AG04449 (cell line): ENCODE measurements at regions of chr14 and their contacts with region 1.

Region 1: DNA sequence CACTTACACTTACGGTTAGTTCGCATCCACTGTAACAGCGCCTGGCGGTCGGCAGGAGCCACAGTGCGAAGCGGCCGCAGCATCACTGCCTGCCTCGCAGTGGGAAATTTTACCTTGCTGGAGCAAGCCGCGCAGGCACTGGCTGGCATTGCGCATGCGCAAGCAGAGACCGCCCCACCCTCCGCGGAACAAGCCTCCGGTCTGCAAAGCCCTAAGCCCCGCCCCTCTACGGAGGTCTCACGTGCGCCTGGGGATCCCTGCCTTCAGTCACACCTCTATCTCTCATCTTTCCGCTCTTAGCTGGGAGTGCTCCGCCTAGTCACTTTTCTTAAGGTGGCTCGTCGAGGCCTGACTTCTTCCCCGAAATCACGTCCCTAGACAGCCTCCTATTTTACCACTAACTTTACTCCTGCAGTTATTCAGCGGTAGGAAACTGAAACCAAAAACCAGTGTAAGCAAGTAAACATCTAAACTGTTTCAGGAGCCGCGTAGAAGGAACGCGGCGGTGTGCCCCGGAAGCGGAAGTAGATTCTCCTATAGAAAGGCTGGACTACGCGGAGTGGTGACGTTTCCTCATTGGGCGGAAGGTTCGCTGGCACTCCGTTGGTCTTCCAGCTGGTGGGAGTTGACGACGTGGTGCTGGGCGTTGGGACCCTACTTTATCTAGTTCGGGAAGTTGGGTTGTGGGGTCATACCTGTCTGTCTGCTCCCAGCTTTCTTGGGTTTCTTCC is at the start of gene SRP54:
- DNase-seq: peak; percentile 75
- H3K4me3 ChIP-seq: peak within 1 kb of the TSS; percentile 94
- CTCF ChIP-seq: peak; percentile 41

Region 2: DNA sequence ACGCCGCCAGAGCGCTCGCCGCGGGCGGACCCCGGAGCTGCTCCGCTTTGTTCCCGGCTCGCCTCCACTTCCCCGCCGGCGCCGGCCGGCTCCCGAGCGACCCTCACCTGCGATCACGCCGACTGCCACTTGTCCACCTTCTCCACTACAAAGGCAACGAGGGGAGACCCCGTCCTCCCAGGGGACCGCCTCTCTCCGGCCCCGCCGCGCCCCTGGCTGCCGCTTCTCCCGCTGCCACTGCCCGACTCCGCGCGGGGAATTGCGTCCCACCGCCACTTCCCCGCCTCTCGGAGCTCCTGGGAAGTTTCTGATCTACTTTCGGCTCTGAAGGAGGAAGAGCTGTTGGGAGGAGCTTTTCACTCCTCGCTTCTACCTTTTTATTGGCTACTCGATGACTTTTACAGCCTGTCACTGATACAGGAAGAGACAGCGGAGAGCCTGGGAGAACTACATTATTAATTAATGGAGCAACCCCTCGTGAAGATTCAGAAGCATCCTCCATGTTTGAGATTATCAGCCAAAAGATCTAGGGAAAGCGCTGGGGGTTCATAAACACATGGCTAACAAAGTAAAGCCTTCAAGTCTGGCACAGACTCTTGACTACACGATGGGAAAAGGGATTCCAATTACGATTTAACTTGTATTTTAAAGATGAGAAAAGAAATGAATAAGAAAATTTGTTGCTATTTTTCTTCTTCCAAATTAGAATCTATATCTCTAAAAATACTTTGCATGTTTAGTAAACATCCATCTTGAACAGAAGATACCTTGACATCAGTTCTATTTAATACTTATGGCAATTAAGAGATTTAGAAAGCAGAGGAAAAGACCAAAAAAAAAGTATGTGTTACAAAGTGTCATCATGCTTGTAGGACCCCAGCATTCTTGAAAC is 107.3 kb before region 1 on chr14 and contains the start of gene BAZ1A:
- CTCF ChIA-PET with region 1: interaction called, 3 read pairs
- POLR2A ChIA-PET with region 1: interaction called, 11 read pairs
- DNase-seq: peak; percentile 65
- H3K4me3 ChIP-seq: peak within 1 kb of the TSS; percentile 86
- CTCF ChIP-seq: no peak